Activated CD4-positive, alpha-beta T cell treated with anti-CD3 and anti-CD28 coated beads, Interleukin-2, amount 10 ng/mL, durations not matched to agents 24 days and 14 days (primary cell): ENCODE measurements at regions of chr20 and their contacts with region 1.

Region 1: GRCh38 chr20:50165684-50166554 is 12.4 kb upstream of the PEDS1 start:
- DNase-seq: peak; percentile 90
- H3K4me3 Mint-ChIP-seq: peak overlapping the region; percentile 75
- H3K27ac Mint-ChIP-seq: peak overlapping the region; percentile 88
- H3K4me1 Mint-ChIP-seq: peaks cover 14% of the 10 kb centered on the region
- H3K27me3 Mint-ChIP-seq: peaks cover 2% of the 10 kb centered on the region

Region 2: GRCh38 chr20:49915378-49916145 is 250.4 kb before region 1 on chr20 and contains the start of gene SPATA2:
- intact Hi-C with region 1: no loop called
- DNase-seq: peak; percentile 97
- H3K4me3 Mint-ChIP-seq: peak within 1 kb of the TSS; percentile 96
- H3K27ac Mint-ChIP-seq: peak within 1 kb of the TSS; percentile 100
- H3K4me1 Mint-ChIP-seq: peaks cover 23% of the 10 kb centered on the region
- H3K27me3 Mint-ChIP-seq: no peaks in the 10 kb centered on the region
- total RNA-seq, gene SPATA2: 8.8 and 9.9 TPM in 2 replicates

Region 3: DNA sequence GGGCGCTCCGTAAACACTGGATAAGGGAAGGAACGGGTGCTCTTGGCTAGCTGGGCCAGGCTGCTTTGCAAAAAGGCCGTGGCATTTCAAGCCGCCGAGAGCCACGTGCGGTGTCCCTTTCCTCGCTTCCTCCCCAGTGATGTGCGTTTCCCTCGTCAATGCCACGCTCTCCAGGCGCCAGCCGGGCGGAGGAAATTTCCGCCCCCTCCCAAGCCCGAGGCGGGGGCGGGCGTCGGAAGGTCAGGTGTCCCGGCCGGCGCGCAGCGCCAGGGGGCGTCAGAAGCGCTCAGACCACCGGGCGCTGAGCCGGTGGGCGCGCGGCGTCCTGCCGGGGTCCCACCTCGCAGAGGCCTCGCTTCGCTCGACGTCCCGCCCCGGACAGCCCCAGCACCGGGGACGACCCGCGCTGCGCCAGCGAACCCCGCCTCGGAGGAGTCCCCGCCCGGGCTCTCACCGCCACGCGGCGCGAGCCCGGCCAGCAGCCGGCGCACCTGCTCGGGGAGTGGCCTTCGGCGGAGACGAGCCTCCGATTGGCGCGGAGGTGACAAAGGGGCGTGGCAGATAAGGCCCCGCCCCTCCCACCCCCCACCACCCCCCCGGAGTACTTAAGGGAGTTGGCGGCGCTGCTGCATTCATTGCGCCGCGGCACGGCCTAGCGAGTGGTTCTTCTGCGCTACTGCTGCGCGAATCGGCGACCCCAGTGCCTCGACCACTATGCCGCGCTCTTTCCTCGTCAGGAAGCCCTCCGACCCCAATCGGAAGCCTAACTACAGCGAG is 183.4 kb before region 1 on chr20 and contains the start of gene SNAI1:
- intact Hi-C with region 1: loop called (anchors 5 kb)
- DNase-seq: peak; percentile 95
- H3K4me3 Mint-ChIP-seq: peak within 1 kb of the TSS; percentile 79
- H3K27ac Mint-ChIP-seq: peak within 1 kb of the TSS; percentile 78
- H3K4me1 Mint-ChIP-seq: peaks cover 13% of the 10 kb centered on the region
- H3K27me3 Mint-ChIP-seq: peaks cover 30% of the 10 kb centered on the region
- total RNA-seq, gene SNAI1: 1.6 and 2.3 TPM in 2 replicates

Region 4: GRCh38 chr20:50120897-50121693 is 44.8 kb before region 1 on chr20:
- intact Hi-C with region 1: loop called (anchors 1 kb)
- DNase-seq: peak; percentile 85
- H3K4me3 Mint-ChIP-seq: no peak overlapping the region
- H3K27ac Mint-ChIP-seq: no peak overlapping the region
- H3K4me1 Mint-ChIP-seq: peaks cover 6% of the 10 kb centered on the region
- H3K27me3 Mint-ChIP-seq: no peaks in the 10 kb centered on the region

Region 5: GRCh38 chr20:50146732-50147662 is 18.9 kb before region 1 on chr20:
- intact Hi-C with region 1: loop called (anchors 2 kb)
- DNase-seq: peak; percentile 93
- H3K4me3 Mint-ChIP-seq: peak overlapping the region; percentile 74
- H3K27ac Mint-ChIP-seq: peak overlapping the region; percentile 97
- H3K4me1 Mint-ChIP-seq: peaks cover 63% of the 10 kb centered on the region
- H3K27me3 Mint-ChIP-seq: no peaks in the 10 kb centered on the region

Region 6: GRCh38 chr20:50153485-50154377 is 12.2 kb before region 1 on chr20 and contains the start of gene PEDS1:
- intact Hi-C with region 1: loop called (anchors 1 kb)
- DNase-seq: peak; percentile 96
- H3K4me3 Mint-ChIP-seq: peak within 1 kb of the TSS; percentile 91
- H3K27ac Mint-ChIP-seq: peak within 1 kb of the TSS; percentile 89
- H3K4me1 Mint-ChIP-seq: peaks cover 42% of the 10 kb centered on the region
- H3K27me3 Mint-ChIP-seq: no peaks in the 10 kb centered on the region
- total RNA-seq, gene PEDS1: 26.3 and 30.2 TPM in 2 replicates

Region 7: GRCh38 chr20:50601511-50602431 is 435.9 kb after region 1 on chr20:
- intact Hi-C with region 1: no loop called
- DNase-seq: no peak
- H3K4me3 Mint-ChIP-seq: no peak overlapping the region
- H3K27ac Mint-ChIP-seq: no peak overlapping the region
- H3K4me1 Mint-ChIP-seq: no peaks in the 10 kb centered on the region
- H3K27me3 Mint-ChIP-seq: peaks cover 5% of the 10 kb centered on the region